B cell (primary cell): ENCODE measurements at regions of chr11 and their contacts with region 1.

Region 1: DNA sequence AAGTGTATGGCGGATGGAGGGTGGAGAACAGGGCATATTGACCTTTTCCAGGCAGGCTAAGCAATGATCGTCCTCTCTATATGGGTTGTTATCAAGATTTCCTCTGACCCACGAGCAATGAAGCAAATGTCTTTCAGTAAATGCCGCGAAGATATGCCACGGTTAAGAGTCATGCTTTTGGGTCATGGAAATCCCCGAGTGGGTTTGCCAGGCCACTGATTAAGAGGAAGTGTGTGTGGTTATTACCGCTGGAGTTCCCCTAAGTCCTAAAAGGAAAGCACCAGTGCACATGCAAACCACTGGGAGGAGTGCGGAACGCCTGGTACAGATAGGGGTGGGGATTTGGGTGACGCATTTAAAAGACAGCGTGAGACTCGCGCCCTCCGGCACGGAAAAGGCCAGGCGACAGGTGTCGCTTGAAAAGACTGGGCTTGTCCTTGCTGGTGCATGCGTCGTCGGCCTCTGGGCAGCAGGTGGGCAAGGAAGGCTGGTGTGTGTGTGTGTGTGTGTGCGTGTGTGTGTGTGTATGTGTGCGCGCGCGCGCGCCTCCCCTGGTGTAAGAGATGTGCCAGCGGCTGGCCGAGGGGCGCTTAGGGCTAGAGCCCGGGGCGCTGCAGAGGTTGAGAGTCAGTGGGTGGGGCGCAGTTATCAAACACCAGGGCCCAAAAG is at the start of gene BIRC3:
- DNase-seq: peak; percentile 99
- ATAC-seq: peak; percentile 87
- H3K4me3 ChIP-seq: peak within 1 kb of the TSS; percentile 76 to 100 (median 92)
- H3K4me3 Mint-ChIP-seq: peak within 1 kb of the TSS; percentile 100
- H3K27ac ChIP-seq: peak within 1 kb of the TSS; percentile 96 to 98
- H3K27ac Mint-ChIP-seq: peak within 1 kb of the TSS; percentile 96
- H3K4me1 ChIP-seq: peaks cover 53 to 58% of the 10 kb centered on the region in 2 donors
- H3K4me1 Mint-ChIP-seq: peaks cover 64% of the 10 kb centered on the region
- H3K27me3 ChIP-seq: no peaks in the 10 kb centered on the region
- H3K27me3 Mint-ChIP-seq: no peaks in the 10 kb centered on the region
- CTCF ChIP-seq: no peak
- total RNA-seq, gene BIRC3: 419 and 428 TPM in 2 replicates

Region 2: GRCh38 chr11:102187416-102188151 is 129.6 kb before region 1 on chr11:
- CTCF ChIA-PET with region 1: no interaction called
- POLR2A ChIA-PET with region 1: no interaction called
- intact Hi-C with region 1: no loop called
- DNase-seq: no peak
- ATAC-seq: no peak
- H3K4me3 ChIP-seq: no peak overlapping the region
- H3K4me3 Mint-ChIP-seq: no peak overlapping the region
- H3K27ac ChIP-seq: no peak overlapping the region
- H3K27ac Mint-ChIP-seq: no peak overlapping the region
- H3K4me1 ChIP-seq: no peaks in the 10 kb centered on the region
- H3K4me1 Mint-ChIP-seq: no peaks in the 10 kb centered on the region
- H3K27me3 ChIP-seq: peaks cover 0 to 4% (median 0%) of the 10 kb centered on the region in 4 experiments
- H3K27me3 Mint-ChIP-seq: peaks cover 20% of the 10 kb centered on the region
- CTCF ChIP-seq: no peak

Region 3: DNA sequence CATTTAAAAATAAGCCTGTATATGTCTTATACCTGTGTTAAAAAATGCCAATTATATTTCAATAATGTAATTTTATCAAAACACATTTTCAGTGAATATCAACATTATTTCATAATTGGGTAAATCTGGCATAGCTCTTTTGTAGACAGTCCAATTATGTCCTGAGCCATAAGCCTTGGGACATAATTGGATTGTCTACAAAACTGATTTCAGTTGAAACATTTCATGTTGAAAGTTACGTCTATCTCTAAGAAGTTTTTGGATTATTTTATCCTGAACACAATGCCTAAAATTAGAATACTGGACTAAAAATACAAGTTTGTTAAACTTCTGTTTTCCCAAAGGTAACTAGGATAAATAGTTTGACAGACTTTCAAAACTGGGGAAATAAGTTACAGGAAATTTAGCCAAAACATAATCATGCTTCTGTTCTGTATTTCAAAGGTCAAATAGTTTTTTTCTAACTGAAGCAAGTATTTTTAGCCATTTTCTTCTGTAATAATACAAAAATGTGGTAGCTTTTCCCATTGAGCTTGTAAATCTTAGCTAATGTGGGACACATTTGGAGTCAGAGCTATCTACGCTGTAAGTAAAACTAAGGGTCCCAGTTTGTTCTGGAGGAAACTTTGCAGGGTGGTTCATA is 100.7 kb before region 1 on chr11:
- CTCF ChIA-PET with region 1: no interaction called
- POLR2A ChIA-PET with region 1: no interaction called
- intact Hi-C with region 1: no loop called
- DNase-seq: no peak
- ATAC-seq: no peak
- H3K4me3 ChIP-seq: no peak overlapping the region
- H3K4me3 Mint-ChIP-seq: no peak overlapping the region
- H3K27ac ChIP-seq: no peak overlapping the region
- H3K27ac Mint-ChIP-seq: no peak overlapping the region
- H3K4me1 ChIP-seq: no peaks in the 10 kb centered on the region
- H3K4me1 Mint-ChIP-seq: no peaks in the 10 kb centered on the region
- H3K27me3 ChIP-seq: peaks cover 0 to 6% (median 0%) of the 10 kb centered on the region in 4 experiments
- H3K27me3 Mint-ChIP-seq: peaks cover 32% of the 10 kb centered on the region
- CTCF ChIP-seq: no peak

Region 4: GRCh38 chr11:102268329-102269193 is 48.7 kb before region 1 on chr11:
- CTCF ChIA-PET with region 1: no interaction called
- POLR2A ChIA-PET with region 1: no interaction called
- intact Hi-C with region 1: loop called (anchors 1 kb)
- DNase-seq: peak; percentile 85
- ATAC-seq: peak; percentile 99
- H3K4me3 ChIP-seq: peak overlapping the region in 4 of 5 experiments; percentile 1 to 62 (median 36)
- H3K4me3 Mint-ChIP-seq: peak overlapping the region; percentile 78
- H3K27ac ChIP-seq: no peak overlapping the region
- H3K27ac Mint-ChIP-seq: peak overlapping the region; percentile 12
- H3K4me1 ChIP-seq: peaks cover 13 to 17% of the 10 kb centered on the region in 2 donors
- H3K4me1 Mint-ChIP-seq: peaks cover 23% of the 10 kb centered on the region
- H3K27me3 ChIP-seq: peaks cover 0 to 17% (median 11%) of the 10 kb centered on the region in 4 experiments
- H3K27me3 Mint-ChIP-seq: peaks cover 22% of the 10 kb centered on the region
- CTCF ChIP-seq: peak; percentile 31

Region 5: DNA sequence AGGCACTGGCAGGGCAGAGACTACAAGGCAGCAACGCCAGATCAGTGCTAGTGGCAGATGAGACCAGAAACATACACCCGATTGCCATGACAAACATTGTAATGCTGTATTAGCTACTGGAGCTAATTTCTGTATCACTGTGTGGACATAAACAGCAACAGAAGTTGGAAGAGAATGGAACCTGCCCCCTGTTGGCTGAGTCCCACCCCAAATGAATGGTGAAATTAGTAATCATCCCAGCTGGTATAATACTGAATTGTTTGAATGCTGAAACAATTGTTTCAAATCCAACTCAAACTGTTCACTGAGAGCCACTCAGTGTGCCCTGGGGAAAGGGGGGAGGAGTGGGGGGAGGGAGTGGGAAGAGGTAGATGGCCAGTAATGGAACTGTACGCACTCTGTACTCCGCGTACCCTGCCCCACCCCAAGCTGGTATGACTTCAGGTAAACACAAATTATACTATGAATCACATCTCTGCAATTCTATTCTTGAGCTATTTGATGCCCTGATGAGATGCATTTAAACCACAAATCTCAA is 11.1 kb before region 1 on chr11:
- CTCF ChIA-PET with region 1: interaction called, 36 read pairs
- POLR2A ChIA-PET with region 1: interaction called, 21 read pairs
- intact Hi-C with region 1: loop called (anchors 1 kb)
- DNase-seq: no peak
- ATAC-seq: peak; percentile 19
- H3K4me3 ChIP-seq: peak overlapping the region in 2 of 5 experiments; percentile 16 to 42
- H3K4me3 Mint-ChIP-seq: peak overlapping the region; percentile 60
- H3K27ac ChIP-seq: peak overlapping the region; percentile 82 to 92
- H3K27ac Mint-ChIP-seq: peak overlapping the region; percentile 93
- H3K4me1 ChIP-seq: peaks cover 69 to 78% of the 10 kb centered on the region in 2 donors
- H3K4me1 Mint-ChIP-seq: peaks cover 66% of the 10 kb centered on the region
- H3K27me3 ChIP-seq: no peaks in the 10 kb centered on the region
- H3K27me3 Mint-ChIP-seq: no peaks in the 10 kb centered on the region
- CTCF ChIP-seq: no peak

Region 6: DNA sequence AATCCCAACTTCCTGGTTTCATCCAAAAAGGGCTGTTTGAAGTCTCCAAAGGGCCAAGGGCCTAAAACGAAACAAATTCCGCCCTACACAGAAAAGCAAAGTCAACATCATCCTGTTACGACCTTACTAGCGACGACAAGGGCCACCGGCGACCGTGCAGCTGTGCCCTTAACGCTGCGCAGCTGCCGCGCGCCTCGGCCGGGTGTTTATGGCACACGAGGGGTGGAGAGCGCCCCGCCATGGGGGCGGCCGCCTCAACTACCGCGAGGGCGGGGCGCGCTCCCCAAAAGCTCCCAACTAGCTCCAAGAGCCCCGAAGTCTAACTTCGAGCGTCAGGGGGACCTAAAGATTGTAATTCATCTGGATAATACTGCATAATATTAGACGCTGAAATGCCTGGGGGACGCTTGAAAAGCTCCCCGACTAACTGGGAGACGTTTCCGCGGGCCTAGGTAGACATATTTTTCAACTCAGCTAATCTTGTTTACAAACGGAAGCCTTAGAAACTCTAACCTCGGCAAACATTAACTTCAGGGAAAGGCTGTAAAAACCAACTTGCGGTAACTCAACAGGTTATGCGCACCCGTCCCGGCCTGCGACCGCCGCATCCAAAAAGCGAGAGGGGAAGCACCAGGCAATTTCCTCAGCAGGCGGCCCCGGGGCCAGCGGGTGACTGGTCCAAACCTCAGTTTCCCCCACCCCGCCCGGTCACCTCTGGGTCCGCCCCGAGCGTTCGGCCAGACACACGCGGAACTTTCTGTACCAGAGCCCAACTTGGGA is 134.6 kb after region 1 on chr11:
- CTCF ChIA-PET with region 1: interaction called, 4 read pairs
- POLR2A ChIA-PET with region 1: no interaction called
- intact Hi-C with region 1: loop called (anchors 1 kb)
- DNase-seq: peak; percentile 88
- ATAC-seq: peak; percentile 58
- H3K4me3 ChIP-seq: peak overlapping the region; percentile 83 to 98 (median 91)
- H3K4me3 Mint-ChIP-seq: peak overlapping the region; percentile 98
- H3K27ac ChIP-seq: peak overlapping the region; percentile 82 to 87
- H3K27ac Mint-ChIP-seq: peak overlapping the region; percentile 98
- H3K4me1 ChIP-seq: peaks cover 56 to 59% of the 10 kb centered on the region in 2 donors
- H3K4me1 Mint-ChIP-seq: peaks cover 73% of the 10 kb centered on the region
- H3K27me3 ChIP-seq: no peaks in the 10 kb centered on the region
- H3K27me3 Mint-ChIP-seq: no peaks in the 10 kb centered on the region
- CTCF ChIP-seq: no peak

Region 7: DNA sequence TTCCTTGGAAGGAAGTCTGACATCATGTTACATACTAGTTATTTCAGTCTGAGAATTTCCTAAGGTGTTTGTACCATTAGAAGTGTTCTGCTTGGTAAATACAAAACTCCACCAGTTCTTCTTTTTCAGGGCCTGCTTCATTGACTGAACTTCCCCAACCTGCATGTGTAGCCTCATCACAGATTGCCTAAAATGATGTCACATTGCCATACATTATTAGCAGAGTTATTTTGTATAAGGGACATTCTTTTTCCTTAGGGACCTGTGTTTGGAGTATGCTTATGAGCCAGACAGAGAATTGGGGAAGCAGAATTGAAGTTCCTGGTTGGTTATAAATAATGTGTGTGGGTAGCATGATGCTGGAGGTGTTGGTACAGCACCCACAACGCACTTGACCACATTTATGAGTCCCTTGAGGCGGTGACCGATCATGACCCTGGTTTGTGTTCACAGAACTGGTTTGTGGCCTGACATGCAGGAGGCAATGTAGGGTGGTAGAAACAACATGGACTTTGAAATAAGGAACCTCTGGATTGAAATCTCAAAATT is 229.8 kb after region 1 on chr11:
- CTCF ChIA-PET with region 1: no interaction called
- POLR2A ChIA-PET with region 1: no interaction called
- intact Hi-C with region 1: loop called (anchors 1 kb)
- DNase-seq: peak; percentile 92
- ATAC-seq: peak; percentile 76
- H3K4me3 ChIP-seq: no peak overlapping the region
- H3K4me3 Mint-ChIP-seq: peak overlapping the region; percentile 31
- H3K27ac ChIP-seq: peak overlapping the region; percentile 86 to 98
- H3K27ac Mint-ChIP-seq: peak overlapping the region; percentile 91
- H3K4me1 ChIP-seq: peaks cover 43 to 46% of the 10 kb centered on the region in 2 donors
- H3K4me1 Mint-ChIP-seq: peaks cover 60% of the 10 kb centered on the region
- H3K27me3 ChIP-seq: no peaks in the 10 kb centered on the region
- H3K27me3 Mint-ChIP-seq: no peaks in the 10 kb centered on the region
- CTCF ChIP-seq: no peak